ENCODE measurements at regions of chr12 and their contacts with region 1.

Region 1: DNA sequence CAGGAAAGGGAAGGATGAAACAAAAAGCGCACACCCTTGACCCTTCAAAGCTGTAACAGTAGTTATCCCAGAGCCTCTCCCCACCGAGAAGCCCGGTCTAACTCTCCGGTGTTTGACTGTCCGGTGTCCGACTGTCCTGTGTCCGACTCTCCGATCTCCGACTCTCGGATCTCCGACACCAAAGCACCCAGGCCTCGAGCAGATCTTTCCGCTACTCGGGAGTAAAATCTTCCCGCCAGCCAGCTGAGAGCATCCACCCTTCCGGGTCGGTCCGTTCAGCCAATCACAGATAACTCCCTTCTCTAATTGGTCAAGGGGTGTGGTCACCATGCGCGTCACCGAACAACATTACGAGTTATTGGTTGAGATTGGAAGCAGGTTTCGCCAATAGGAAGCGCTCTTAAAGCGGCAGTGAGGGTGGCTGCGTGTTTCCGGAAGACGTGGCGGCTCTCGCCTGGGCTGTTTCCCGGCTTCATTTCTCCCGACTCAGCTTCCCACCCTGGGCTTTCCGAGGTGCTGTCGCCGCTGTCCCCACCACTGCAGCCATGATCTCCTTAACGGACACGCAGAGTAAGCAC is at the starts of genes GOLT1B and RECQL:
- DNase-seq: peak; percentile 91
- H3K4me3 Mint-ChIP-seq: no peak within 1 kb of the TSS
- H3K27ac Mint-ChIP-seq: no peak within 1 kb of the TSS
- H3K4me1 Mint-ChIP-seq: peaks cover 45% of the 10 kb centered on the region
- H3K27me3 Mint-ChIP-seq: no peaks in the 10 kb centered on the region
- total RNA-seq, gene GOLT1B: 42.2 and 46.1 TPM in 2 replicates
- total RNA-seq, gene RECQL: 68.4 and 69.0 TPM in 2 replicates

Region 2: DNA sequence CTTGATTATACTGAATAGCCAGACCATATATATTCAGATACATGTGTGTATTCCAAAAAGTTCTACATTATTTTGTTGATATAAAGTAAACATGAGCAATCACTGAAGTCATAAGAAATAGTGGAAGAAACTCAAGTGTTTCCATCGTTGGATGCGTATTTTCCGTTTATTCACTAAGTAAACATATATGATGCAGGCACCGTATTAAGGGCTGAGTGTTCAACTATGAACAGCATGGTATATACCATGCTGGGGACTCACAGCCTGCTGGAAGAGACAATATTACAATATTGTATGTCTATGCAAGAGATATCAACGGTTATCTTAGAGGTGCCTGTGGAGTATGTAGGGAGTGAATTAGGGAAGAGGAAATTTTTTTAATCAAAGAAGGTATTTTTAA is 62.8 kb before region 1 on chr12:
- intact Hi-C with region 1: loop called (anchors 1 kb)
- DNase-seq: no peak
- H3K4me3 Mint-ChIP-seq: peak overlapping the region; percentile 92
- H3K27ac Mint-ChIP-seq: peak overlapping the region; percentile 93
- H3K4me1 Mint-ChIP-seq: peaks cover 39% of the 10 kb centered on the region
- H3K27me3 Mint-ChIP-seq: no peaks in the 10 kb centered on the region

Region 3: GRCh38 chr12:21476949-21477348 is 24.5 kb before region 1 on chr12:
- intact Hi-C with region 1: no loop called
- DNase-seq: no peak
- H3K4me3 Mint-ChIP-seq: no peak overlapping the region
- H3K27ac Mint-ChIP-seq: peak overlapping the region; percentile 74
- H3K4me1 Mint-ChIP-seq: peaks cover 26% of the 10 kb centered on the region
- H3K27me3 Mint-ChIP-seq: no peaks in the 10 kb centered on the region

Region 4: DNA sequence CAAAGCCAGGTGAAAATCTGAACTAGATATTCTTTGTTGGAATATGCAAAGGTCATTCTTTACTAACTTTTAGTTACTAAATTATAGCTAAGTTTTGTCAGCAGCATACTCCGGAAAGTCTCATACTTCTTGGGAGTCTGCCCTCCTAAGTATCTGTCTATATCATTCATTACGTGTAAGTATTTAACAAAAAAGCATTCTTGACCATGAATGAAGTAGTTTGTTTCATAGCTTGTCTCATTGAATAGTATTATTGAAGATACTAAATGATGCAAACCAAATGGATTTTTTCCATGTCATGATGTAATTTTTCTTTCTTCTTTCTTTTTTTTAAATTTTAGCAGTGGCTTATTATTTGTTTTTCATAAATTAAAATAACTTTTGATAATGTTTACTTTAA is 14.8 kb after region 1 on chr12:
- intact Hi-C with region 1: no loop called
- DNase-seq: no peak
- H3K4me3 Mint-ChIP-seq: no peak overlapping the region
- H3K27ac Mint-ChIP-seq: no peak overlapping the region
- H3K4me1 Mint-ChIP-seq: peaks cover 2% of the 10 kb centered on the region
- H3K27me3 Mint-ChIP-seq: no peaks in the 10 kb centered on the region

Region 5: GRCh38 chr12:21527451-21528180 is 26.1 kb after region 1 on chr12:
- intact Hi-C with region 1: loop called (anchors 1 kb)
- DNase-seq: peak; percentile 57
- H3K4me3 Mint-ChIP-seq: peak overlapping the region; percentile 77
- H3K27ac Mint-ChIP-seq: no peak overlapping the region
- H3K4me1 Mint-ChIP-seq: peaks cover 8% of the 10 kb centered on the region
- H3K27me3 Mint-ChIP-seq: peaks cover 25% of the 10 kb centered on the region

Region 6: GRCh38 chr12:21559855-21560569 is 58.5 kb after region 1 on chr12:
- intact Hi-C with region 1: loop called (anchors 2 kb)
- DNase-seq: no peak
- H3K4me3 Mint-ChIP-seq: no peak overlapping the region
- H3K27ac Mint-ChIP-seq: peak overlapping the region; percentile 75
- H3K4me1 Mint-ChIP-seq: peaks cover 11% of the 10 kb centered on the region
- H3K27me3 Mint-ChIP-seq: no peaks in the 10 kb centered on the region

Region 7: DNA sequence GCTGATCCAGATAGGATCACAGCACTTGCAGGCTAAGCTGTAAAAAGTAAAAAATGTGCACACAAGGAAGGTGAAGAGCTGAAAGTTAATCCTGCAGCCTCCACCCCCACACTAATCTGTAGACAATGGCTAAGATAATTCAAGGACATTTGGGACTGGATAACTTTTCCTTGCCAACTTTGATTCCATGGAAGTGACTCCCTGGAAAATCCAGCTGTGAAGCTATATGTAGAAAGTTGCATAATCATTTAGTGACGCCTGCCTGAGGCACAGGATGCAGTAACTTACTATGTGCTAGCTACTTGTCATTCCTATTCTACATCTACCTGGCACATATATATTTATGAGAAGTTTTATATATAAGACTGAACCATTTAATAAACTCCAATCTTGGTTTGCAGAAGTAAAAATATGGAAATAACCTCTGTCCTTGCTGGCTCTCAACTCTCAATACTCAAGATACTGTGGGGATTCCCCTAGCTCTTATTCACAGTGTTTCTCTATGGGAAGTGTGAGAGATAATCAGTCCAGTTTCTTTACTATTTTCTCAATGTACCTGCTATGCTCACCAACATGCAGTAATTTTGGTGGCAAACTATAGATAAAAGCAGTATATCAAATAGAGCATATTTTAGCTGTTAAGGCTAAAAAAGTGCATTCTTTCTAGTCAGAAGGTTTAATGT is 141.4 kb after region 1 on chr12:
- intact Hi-C with region 1: loop called (anchors 5 kb)
- DNase-seq: no peak
- H3K4me3 Mint-ChIP-seq: no peak overlapping the region
- H3K27ac Mint-ChIP-seq: peak overlapping the region; percentile 56
- H3K4me1 Mint-ChIP-seq: peaks cover 55% of the 10 kb centered on the region
- H3K27me3 Mint-ChIP-seq: no peaks in the 10 kb centered on the region

Region 8: DNA sequence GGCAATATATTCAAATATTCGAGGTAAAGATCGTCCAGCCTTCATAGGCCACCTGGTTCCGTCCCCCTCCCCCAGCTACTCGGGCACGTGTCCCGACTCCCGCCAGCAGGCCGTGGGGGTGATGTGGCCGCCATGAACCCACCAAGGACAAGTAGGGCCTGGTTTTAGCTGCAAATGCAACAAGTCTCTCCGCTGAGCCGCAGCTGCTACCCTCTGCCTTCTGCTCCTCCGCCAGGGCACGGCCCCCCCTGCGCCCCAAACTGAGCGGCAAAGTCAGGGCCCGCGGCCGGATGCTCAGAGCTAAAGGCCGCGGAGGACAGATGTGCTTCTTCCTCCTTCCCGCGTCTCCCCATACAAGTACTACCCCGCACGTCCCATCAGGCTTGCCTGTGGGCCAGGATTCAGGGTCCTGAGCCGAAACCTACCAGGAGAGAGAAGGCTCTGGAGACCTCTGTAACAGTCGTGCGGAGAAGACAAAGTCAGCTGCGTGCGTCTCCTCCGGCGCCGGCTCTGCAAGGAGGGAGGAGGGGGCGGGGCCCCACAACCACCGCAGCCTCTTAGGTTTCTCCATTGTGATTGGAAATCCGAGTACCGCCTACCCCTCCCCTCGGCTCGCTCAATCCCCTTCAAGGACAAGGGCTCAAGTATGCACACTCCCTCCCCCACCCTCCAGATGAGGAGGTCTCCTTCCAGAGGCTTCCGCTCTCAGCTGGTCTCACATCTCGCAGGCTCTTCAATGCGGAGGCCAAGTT is 156.0 kb after region 1 on chr12 and contains the start of gene LDHB:
- intact Hi-C with region 1: loop called (anchors 1 kb)
- DNase-seq: peak; percentile 93
- H3K4me3 Mint-ChIP-seq: peak within 1 kb of the TSS; percentile 99
- H3K27ac Mint-ChIP-seq: peak within 1 kb of the TSS; percentile 99
- H3K4me1 Mint-ChIP-seq: peaks cover 37% of the 10 kb centered on the region
- H3K27me3 Mint-ChIP-seq: no peaks in the 10 kb centered on the region
- total RNA-seq, gene LDHB: 1,305 and 1,321 TPM in 2 replicates

Region 9: DNA sequence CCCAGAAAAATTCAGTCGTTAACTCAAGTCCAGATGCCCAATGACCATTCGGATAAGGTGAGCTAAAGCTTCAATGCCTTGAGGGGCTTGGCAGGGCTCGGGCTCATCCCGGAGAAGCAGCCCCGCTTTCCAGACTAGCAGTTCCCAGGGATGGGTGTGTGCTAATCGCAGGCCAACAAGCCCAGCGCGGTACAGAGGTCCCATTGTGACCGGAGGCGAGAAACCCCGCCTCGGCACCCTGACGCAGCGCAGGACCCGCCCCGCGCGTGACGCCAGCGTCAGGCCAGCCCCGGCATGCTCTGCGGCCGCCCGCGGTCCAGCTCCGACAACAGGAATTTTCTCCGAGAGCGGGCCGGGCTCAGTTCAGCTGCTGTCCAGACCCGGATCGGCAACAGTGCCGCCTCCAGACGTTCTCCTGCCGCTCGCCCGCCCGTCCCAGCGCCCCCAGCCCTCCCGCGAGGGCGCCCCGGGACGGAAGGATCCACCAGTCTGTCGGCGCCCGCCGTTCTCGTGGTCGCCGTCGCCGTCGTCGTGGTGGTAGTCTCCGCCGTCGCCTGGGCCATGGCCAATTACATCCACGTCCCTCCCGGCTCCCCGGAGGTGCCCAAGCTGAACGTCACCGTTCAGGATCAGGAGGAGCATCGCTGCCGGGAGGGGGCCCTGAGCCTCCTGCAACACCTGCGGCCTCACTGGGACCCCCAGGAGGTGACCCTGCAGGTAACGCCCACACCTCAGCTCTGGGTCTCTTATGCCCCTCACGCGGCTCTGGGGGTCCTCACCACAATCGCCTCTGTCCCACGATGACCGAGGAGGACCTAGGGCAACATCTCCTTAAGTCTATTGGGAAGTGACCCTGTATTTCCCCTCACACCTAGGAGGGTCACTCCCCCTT is 1123.6 kb after region 1 on chr12 and contains the start of gene ETNK1:
- intact Hi-C with region 1: loop called (anchors 10 kb)
- DNase-seq: peak; percentile 83
- H3K4me3 Mint-ChIP-seq: peak within 1 kb of the TSS; percentile 90
- H3K27ac Mint-ChIP-seq: peak within 1 kb of the TSS; percentile 89
- H3K4me1 Mint-ChIP-seq: peaks cover 33% of the 10 kb centered on the region
- H3K27me3 Mint-ChIP-seq: peaks cover 15% of the 10 kb centered on the region
- total RNA-seq, gene ETNK1: 120 and 122 TPM in 2 replicates